K562 (cell line): ENCODE measurements at regions of chr7 and their contacts with region 1.

Region 1: DNA sequence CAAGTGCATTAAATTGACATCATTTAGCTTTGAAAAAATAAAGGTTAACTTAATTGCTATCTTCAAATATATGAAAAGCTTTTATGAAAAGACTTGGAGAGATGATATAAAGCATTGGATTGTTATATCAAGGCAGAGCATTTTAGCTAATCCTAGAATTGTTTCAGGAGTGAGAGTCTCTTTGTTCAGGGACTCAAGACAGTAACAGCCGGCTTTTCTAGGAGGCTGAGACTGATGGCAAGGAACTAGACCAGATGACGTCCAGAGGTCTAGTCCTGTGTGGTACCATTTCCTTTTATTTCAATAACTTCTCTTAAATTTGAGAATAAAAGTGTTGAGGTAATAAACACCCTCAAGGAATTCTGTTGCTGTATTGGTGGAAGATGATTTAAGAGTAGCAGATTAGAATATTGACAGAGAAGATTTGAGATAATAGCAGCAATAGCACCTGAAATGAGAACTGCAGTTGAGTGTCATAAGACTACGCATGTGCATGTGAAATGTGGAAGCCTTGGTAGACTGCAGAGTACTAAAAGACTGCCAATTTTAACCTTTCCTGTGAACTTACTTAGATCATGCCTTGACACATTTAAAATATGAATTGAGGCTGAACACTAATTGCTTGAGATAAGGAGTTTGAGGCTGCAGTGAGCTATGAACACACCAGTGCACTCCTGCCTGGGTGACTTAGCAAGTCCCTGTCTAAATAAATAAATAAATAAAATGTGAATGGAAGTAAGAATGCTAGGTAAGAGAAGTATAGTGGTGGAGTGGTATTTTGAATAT is 79.6 kb downstream of the ZNRF2 start:
- DNase-seq: peak in 1 of 4 experiments; percentile 59
- ATAC-seq: peak; percentile 88
- H3K4me3 ChIP-seq: no peak overlapping the region
- H3K27ac ChIP-seq: peak overlapping the region; percentile 24; the same call in 1 of the 3 replicates
- H3K4me1 ChIP-seq: peaks cover 0 to 10% of the 10 kb centered on the region in 2 experiments; a peak in 3 of 5 replicates
- H3K27me3 ChIP-seq: no peaks in the 10 kb centered on the region
- CTCF ChIP-seq: no peak
- EP300 ChIP-seq: no peak
- POLR2A ChIP-seq: no peak
- RAD21 ChIP-seq: no peak

Region 2: DNA sequence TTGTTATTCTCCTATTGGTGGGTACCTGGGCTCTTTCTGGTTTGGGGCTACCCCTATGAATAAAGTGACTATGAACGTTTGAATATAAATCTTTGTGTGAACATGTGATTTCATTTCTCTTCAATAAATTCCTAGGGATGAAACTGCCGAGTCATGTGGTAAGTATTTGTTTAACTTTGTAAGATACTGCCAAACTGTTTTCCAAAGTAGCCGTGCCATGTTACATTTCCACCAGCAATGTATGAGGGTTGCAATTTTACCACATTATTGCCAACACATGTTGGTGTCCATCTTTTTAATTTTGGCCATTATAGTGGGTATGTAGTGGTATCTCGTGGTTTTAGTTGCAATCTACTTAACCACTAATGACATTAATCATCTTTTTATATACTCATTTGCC is 15.2 kb after region 1 on chr7:
- CTCF ChIA-PET with region 1: no interaction called
- POLR2A ChIA-PET with region 1: interaction called, 10 read pairs
- in situ Hi-C with region 1: no loop called
- intact Hi-C with region 1: no loop called
- DNase-seq: no peak
- ATAC-seq: no peak
- H3K4me3 ChIP-seq: no peak overlapping the region
- H3K27ac ChIP-seq: no peak overlapping the region
- H3K4me1 ChIP-seq: no peaks in the 10 kb centered on the region
- H3K27me3 ChIP-seq: no peaks in the 10 kb centered on the region
- CTCF ChIP-seq: no peak
- EP300 ChIP-seq: no peak
- POLR2A ChIP-seq: no peak
- RAD21 ChIP-seq: no peak